Activated CD8-positive, alpha-beta T cell treated with anti-CD3 and anti-CD28 coated beads for 36 hours (primary cell): ENCODE measurements at regions of chr6 and their contacts with region 1.

Region 1: GRCh38 chr6:43143235-43144124 is 27.6 kb upstream of the SRF start:
- DNase-seq: peak; percentile 86
- ATAC-seq: peak; percentile 93
- H3K4me3 Mint-ChIP-seq: peak overlapping the region; percentile 76
- H3K27ac Mint-ChIP-seq: peak overlapping the region; percentile 97
- H3K4me1 Mint-ChIP-seq: peaks cover 24% of the 10 kb centered on the region
- H3K27me3 Mint-ChIP-seq: no peaks in the 10 kb centered on the region
- CTCF ChIP-seq: peak; percentile 92

Region 2: GRCh38 chr6:42911171-42912021 is 232.1 kb before region 1 on chr6:
- CTCF ChIA-PET with region 1: interaction called, 12 read pairs
- POLR2A ChIA-PET with region 1: no interaction called
- intact Hi-C with region 1: no loop called
- DNase-seq: no peak
- ATAC-seq: peak; percentile 39
- H3K4me3 Mint-ChIP-seq: peak overlapping the region; percentile 43
- H3K27ac Mint-ChIP-seq: no peak overlapping the region
- H3K4me1 Mint-ChIP-seq: peaks cover 4% of the 10 kb centered on the region
- H3K27me3 Mint-ChIP-seq: peaks cover 10% of the 10 kb centered on the region
- CTCF ChIP-seq: no peak

Region 3: GRCh38 chr6:43013843-43014433 is 129.5 kb before region 1 on chr6 and contains the starts of genes KLHDC3 and MEA1:
- CTCF ChIA-PET with region 1: interaction called, 17 read pairs
- POLR2A ChIA-PET with region 1: interaction called, 3 read pairs
- intact Hi-C with region 1: no loop called
- DNase-seq: peak; percentile 100
- ATAC-seq: peak; percentile 98
- H3K4me3 Mint-ChIP-seq: peak within 1 kb of the TSS; percentile 96
- H3K27ac Mint-ChIP-seq: peak within 1 kb of the TSS; percentile 93
- H3K4me1 Mint-ChIP-seq: peaks cover 52% of the 10 kb centered on the region
- H3K27me3 Mint-ChIP-seq: no peaks in the 10 kb centered on the region
- CTCF ChIP-seq: no peak
- total RNA-seq, gene KLHDC3: 58.6 to 64.0 TPM
- total RNA-seq, gene MEA1: 84.8 to 92.3 TPM

Region 4: GRCh38 chr6:43053545-43054205 is 89.8 kb before region 1 on chr6 and contains the start of gene CUL7:
- CTCF ChIA-PET with region 1: interaction called, 32 read pairs
- POLR2A ChIA-PET with region 1: interaction called, 6 read pairs
- intact Hi-C with region 1: no loop called
- DNase-seq: peak; percentile 94
- ATAC-seq: peak; percentile 99
- H3K4me3 Mint-ChIP-seq: peak within 1 kb of the TSS; percentile 93
- H3K27ac Mint-ChIP-seq: peak within 1 kb of the TSS; percentile 96
- H3K4me1 Mint-ChIP-seq: peaks cover 44% of the 10 kb centered on the region
- H3K27me3 Mint-ChIP-seq: no peaks in the 10 kb centered on the region
- CTCF ChIP-seq: no peak
- total RNA-seq, gene CUL7: 13.9 TPM

Region 5: GRCh38 chr6:43070028-43070632 is 73.3 kb before region 1 on chr6:
- CTCF ChIA-PET with region 1: interaction called, 26 read pairs
- POLR2A ChIA-PET with region 1: interaction called, 3 read pairs
- intact Hi-C with region 1: loop called (anchors 2 kb)
- DNase-seq: peak; percentile 45
- ATAC-seq: peak; percentile 85
- H3K4me3 Mint-ChIP-seq: no peak overlapping the region
- H3K27ac Mint-ChIP-seq: no peak overlapping the region
- H3K4me1 Mint-ChIP-seq: no peaks in the 10 kb centered on the region
- H3K27me3 Mint-ChIP-seq: no peaks in the 10 kb centered on the region
- CTCF ChIP-seq: peak; percentile 79

Region 6: GRCh38 chr6:43096451-43097097 is 46.9 kb before region 1 on chr6:
- CTCF ChIA-PET with region 1: interaction called, 10 read pairs
- POLR2A ChIA-PET with region 1: no interaction called
- intact Hi-C with region 1: no loop called
- DNase-seq: no peak
- ATAC-seq: no peak
- H3K4me3 Mint-ChIP-seq: no peak overlapping the region
- H3K27ac Mint-ChIP-seq: no peak overlapping the region
- H3K4me1 Mint-ChIP-seq: peaks cover 2% of the 10 kb centered on the region
- H3K27me3 Mint-ChIP-seq: no peaks in the 10 kb centered on the region
- CTCF ChIP-seq: no peak

Region 7: GRCh38 chr6:43159599-43159998 is 16.1 kb after region 1 on chr6:
- CTCF ChIA-PET with region 1: interaction called, 28 read pairs
- POLR2A ChIA-PET with region 1: interaction called, 4 read pairs
- intact Hi-C with region 1: no loop called
- DNase-seq: no peak
- ATAC-seq: no peak
- H3K4me3 Mint-ChIP-seq: no peak overlapping the region
- H3K27ac Mint-ChIP-seq: no peak overlapping the region
- H3K4me1 Mint-ChIP-seq: no peaks in the 10 kb centered on the region
- H3K27me3 Mint-ChIP-seq: no peaks in the 10 kb centered on the region
- CTCF ChIP-seq: no peak

Region 8: GRCh38 chr6:43310624-43311023 is 167.1 kb after region 1 on chr6:
- CTCF ChIA-PET with region 1: no interaction called
- POLR2A ChIA-PET with region 1: no interaction called
- intact Hi-C with region 1: no loop called
- DNase-seq: no peak
- ATAC-seq: no peak
- H3K4me3 Mint-ChIP-seq: no peak overlapping the region
- H3K27ac Mint-ChIP-seq: no peak overlapping the region
- H3K4me1 Mint-ChIP-seq: peaks cover 8% of the 10 kb centered on the region
- H3K27me3 Mint-ChIP-seq: peaks cover 3% of the 10 kb centered on the region
- CTCF ChIP-seq: no peak